ENCODE measurements at regions of chr13 and their contacts with region 1.

Region 1: DNA sequence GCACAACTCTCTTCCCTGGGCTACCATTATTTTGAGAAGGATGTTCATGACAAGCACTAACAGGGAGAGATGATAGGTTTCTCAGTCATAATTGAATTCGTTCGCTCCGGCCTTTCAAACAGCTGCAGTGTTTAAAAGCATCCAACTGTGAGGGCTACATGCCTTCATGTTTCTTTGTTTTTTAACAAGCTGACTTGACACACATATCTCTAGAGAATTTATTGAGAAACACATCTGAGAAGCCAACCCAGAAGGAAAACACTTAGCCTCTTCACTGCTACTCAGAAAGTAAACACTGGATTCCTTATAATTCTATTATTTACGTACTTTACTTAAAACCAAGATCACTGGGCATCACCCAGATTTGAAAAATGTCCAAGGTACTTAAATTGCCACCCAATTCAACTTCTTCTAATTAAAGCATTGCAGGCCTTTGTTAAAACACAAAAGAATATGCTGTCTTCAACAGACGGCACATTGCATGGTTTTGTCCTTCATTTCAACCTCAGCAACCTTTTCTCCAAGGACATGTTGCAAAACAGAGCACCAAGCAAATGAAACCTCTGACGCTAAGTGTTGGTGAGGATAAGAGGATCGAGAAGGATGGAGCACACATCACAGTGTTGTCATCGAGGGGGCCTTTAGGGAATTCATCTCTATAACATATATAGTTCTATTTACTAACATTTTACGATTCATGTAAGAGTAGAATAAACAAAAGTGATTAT is 75.8 kb downstream of the TBC1D4 start:
- DNase-seq: no peak
- ATAC-seq: peak in 3 of 4 donors; percentile 13 to 57 (median 38)
- H3K4me3 ChIP-seq: peak overlapping the region in 1 of 12 donors; percentile 8
- H3K27ac ChIP-seq: peak overlapping the region; percentile 19 to 86 (median 56)
- H3K4me1 ChIP-seq: peaks cover 0 to 46% (median 24%) of the 10 kb centered on the region in 12 donors
- H3K27me3 ChIP-seq: no peaks in the 10 kb centered on the region
- CTCF ChIP-seq: no peak
- POLR2A ChIP-seq: no peak

Region 2: GRCh38 chr13:74796157-74796556 is 610.0 kb before region 1 on chr13:
- intact Hi-C with region 1: no loop called
- DNase-seq: no peak
- ATAC-seq: no peak
- H3K4me3 ChIP-seq: no peak overlapping the region
- H3K27ac ChIP-seq: no peak overlapping the region
- H3K4me1 ChIP-seq: no peaks in the 10 kb centered on the region
- H3K27me3 ChIP-seq: no peaks in the 10 kb centered on the region
- CTCF ChIP-seq: no peak
- POLR2A ChIP-seq: no peak

Region 3: DNA sequence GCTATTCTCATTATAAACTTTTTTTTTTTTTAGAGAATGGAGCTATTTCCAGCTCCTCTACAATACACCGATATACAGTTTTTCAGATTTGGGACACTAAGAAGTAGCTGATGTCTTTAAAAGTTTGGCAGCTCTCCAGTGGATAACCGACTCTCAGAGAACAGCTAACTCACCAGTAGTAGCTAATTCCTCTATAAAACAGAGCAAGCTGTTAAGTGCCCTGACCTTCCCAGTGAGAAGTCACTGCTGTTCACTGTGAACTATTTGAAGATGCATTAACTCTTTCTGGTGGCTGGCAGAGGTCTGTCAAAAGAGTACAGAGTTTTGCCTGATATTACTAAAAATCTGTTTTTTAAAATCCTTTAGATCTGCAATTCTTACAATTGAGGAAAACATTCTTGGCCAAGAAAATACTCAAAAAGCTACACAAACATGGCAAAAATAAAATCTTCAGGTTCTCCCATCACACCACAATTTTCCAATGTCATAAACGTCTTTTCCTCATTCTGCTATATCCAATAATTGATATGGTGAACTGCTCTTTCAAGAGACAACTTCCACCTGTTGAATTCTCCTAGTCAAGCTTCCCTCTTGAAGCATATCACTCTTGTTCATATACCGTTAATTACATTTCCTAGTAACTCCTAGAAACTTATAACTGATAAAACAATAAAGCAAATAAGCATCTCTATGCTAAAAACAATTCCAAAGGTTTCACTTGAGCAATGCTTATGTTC is 31.6 kb after region 1 on chr13:
- intact Hi-C with region 1: loop called in 1 of 10 experiments (anchors 5 kb)
- DNase-seq: no peak
- ATAC-seq: peak in 3 of 4 donors; percentile 65 to 86 (median 69)
- H3K4me3 ChIP-seq: peak overlapping the region in 2 of 12 donors; percentile 8 to 9
- H3K27ac ChIP-seq: peak overlapping the region in 10 of 12 donors; percentile 28 to 77 (median 58)
- H3K4me1 ChIP-seq: peaks cover 0 to 52% (median 26%) of the 10 kb centered on the region in 12 donors
- H3K27me3 ChIP-seq: no peaks in the 10 kb centered on the region
- CTCF ChIP-seq: no peak
- POLR2A ChIP-seq: no peak

Region 4: GRCh38 chr13:75445717-75446499 is 39.8 kb after region 1 on chr13:
- intact Hi-C with region 1: loop called in 2 of 10 experiments (anchors 5 kb)
- DNase-seq: no peak
- ATAC-seq: peak; percentile 63 to 79 (median 74)
- H3K4me3 ChIP-seq: peak overlapping the region in 11 of 12 donors; percentile 2 to 41 (median 27)
- H3K27ac ChIP-seq: peak overlapping the region; percentile 69 to 87 (median 82)
- H3K4me1 ChIP-seq: peaks cover 0 to 43% (median 20%) of the 10 kb centered on the region in 12 donors
- H3K27me3 ChIP-seq: no peaks in the 10 kb centered on the region
- CTCF ChIP-seq: no peak
- POLR2A ChIP-seq: no peak

Region 5: DNA sequence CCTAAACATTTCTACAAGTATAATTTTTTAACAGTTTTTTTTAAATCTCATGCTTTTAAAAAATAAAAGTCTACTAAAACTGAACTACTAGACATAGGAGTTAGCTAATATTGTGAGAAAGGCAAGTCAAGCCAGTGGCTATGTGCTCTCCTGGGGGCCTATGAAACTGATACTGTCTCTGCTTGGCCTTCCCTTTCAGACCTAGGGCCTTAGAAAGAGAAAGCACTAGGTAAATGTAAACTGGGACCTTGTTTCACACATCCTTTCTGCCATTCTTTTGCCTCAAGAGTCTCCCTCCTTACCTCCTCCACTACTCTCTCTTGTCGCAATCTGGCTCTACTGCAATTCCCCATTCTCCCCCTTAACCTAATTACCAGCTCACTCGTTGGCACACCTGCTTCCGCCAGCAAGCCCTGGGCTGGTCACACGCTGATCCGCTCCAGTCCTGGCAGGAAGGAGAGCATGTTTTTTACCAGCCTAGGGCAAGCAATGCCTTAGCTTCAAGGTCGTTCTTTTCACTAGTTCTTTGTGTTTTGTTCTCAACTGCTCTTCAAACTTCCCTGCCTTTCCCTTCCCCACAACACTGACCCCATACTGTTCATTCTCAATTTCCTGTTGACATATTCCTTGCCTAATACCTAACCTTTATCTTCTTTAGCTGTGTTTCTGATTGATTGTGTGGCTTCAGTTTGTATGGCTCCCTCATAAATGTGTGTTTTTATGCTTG is 52.7 kb after region 1 on chr13:
- intact Hi-C with region 1: loop called in 1 of 10 experiments (anchors 5 kb)
- DNase-seq: peak; percentile 50 to 81 (median 65)
- ATAC-seq: peak; percentile 92 to 95 (median 94)
- H3K4me3 ChIP-seq: no peak overlapping the region
- H3K27ac ChIP-seq: peak overlapping the region; percentile 63 to 87 (median 78)
- H3K4me1 ChIP-seq: peaks cover 0 to 83% (median 31%) of the 10 kb centered on the region in 12 donors
- H3K27me3 ChIP-seq: no peaks in the 10 kb centered on the region
- CTCF ChIP-seq: no peak
- POLR2A ChIP-seq: no peak

Region 6: GRCh38 chr13:75468098-75468497 is 62.0 kb after region 1 on chr13:
- intact Hi-C with region 1: loop called in 1 of 10 experiments (anchors 5 kb)
- DNase-seq: no peak
- ATAC-seq: peak in 1 of 4 donors; percentile 20
- H3K4me3 ChIP-seq: no peak overlapping the region
- H3K27ac ChIP-seq: peak overlapping the region in 6 of 12 donors; percentile 19 to 64 (median 21)
- H3K4me1 ChIP-seq: peaks cover 0 to 59% (median 19%) of the 10 kb centered on the region in 12 donors
- H3K27me3 ChIP-seq: no peaks in the 10 kb centered on the region
- CTCF ChIP-seq: no peak
- POLR2A ChIP-seq: no peak

Measured in heart left ventricle (tissue), 16 donors.